ENCODE measurements at regions of chr11 and their contacts with region 1.

Region 1: GRCh38 chr11:125995313-125995712 is 49.5 kb downstream of the VSIG10L2 start:
- DNase-seq: no peak
- ATAC-seq: peak; percentile 99
- H3K4me3 ChIP-seq: peak overlapping the region; percentile 1; the same call in 1 of the 2 replicates
- H3K27ac ChIP-seq: 0 out of 2 replicates have a peak overlapping the region, but pooled peaks have one; percentile 14
- H3K4me1 ChIP-seq: peaks cover 8% of the 10 kb centered on the region
- H3K27me3 ChIP-seq: no peaks in the 10 kb centered on the region
- CTCF ChIP-seq: no peak
- EP300 ChIP-seq: no peak
- POLR2A ChIP-seq: no peak
- RAD21 ChIP-seq: no peak

Region 2: DNA sequence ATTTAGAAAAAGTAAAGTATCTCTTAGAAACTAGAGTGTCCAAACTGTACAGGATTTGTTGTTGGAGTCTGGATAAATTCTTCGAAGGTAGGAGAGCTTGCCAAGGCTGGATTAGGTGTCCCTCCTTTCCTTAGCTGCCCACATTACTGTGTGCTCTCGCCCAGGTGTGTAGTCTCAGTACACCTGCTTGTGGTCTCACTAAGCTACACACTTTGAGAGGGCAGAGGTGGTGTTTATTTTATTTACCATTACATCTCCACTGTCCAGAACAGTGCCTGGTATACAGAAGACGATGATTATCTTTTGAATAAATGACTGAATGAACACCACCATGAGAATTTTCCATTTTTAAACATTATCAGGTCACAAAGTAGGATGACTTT is 13.0 kb before region 1 on chr11:
- CTCF ChIA-PET with region 1: interaction called, 4 read pairs
- POLR2A ChIA-PET with region 1: interaction called, 4 read pairs
- RAD21 ChIA-PET with region 1: no interaction called
- SMC1A ChIA-PET with region 1: interaction called, 31 read pairs
- in situ Hi-C with region 1: no loop called
- intact Hi-C with region 1: no loop called
- DNase-seq: no peak
- ATAC-seq: peak; percentile 35
- H3K4me3 ChIP-seq: no peak overlapping the region
- H3K27ac ChIP-seq: peak overlapping the region; percentile 50; the same call in 1 of the 2 replicates
- H3K4me1 ChIP-seq: no peaks in the 10 kb centered on the region
- H3K27me3 ChIP-seq: no peaks in the 10 kb centered on the region; a peak in 1 of 4 replicates
- CTCF ChIP-seq: no peak
- EP300 ChIP-seq: no peak
- POLR2A ChIP-seq: no peak
- RAD21 ChIP-seq: no peak

Region 3: DNA sequence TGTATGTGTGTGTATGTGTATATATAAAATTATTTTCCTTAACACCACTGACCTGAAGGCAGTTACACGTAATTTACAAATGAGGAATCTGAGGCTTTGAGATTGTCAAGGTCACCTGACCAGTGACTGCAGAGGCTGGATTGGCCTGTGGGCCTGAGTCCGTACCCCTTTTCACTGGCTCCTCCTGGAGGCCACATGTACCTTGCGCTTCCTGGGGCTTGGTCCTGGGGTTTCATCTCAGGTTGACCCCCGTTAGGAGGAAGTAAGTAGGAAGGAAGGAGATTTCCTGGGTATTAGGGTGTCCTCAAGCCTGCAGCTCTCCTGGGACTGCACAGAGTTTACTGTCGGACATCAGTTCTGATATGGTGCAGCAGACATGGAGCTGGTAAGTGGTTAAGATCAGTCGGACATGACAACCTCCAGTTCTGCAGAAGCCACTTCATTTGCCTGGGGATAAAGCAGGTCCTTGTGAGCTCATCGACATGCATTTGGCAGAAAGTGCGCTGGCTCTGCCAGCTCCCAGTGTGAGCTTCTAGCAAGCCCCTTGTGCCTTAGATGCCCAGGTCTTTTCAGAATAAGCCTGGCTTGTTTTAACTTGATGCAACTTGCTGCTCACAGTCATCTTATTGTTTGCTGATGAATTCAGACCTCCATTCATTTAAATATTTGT is 396.8 kb after region 1 on chr11:
- CTCF ChIA-PET with region 1: no interaction called
- POLR2A ChIA-PET with region 1: no interaction called
- RAD21 ChIA-PET with region 1: no interaction called
- SMC1A ChIA-PET with region 1: no interaction called
- in situ Hi-C with region 1: no loop called
- intact Hi-C with region 1: no loop called
- DNase-seq: peak; percentile 35
- ATAC-seq: peak; percentile 75
- H3K4me3 ChIP-seq: no peak overlapping the region
- H3K27ac ChIP-seq: no peak overlapping the region
- H3K4me1 ChIP-seq: peaks cover 9% of the 10 kb centered on the region
- H3K27me3 ChIP-seq: no peaks in the 10 kb centered on the region
- CTCF ChIP-seq: peak in 2 of 3 experiments; percentile 22 to 29; a peak in 4 of 6 replicates
- EP300 ChIP-seq: no peak
- POLR2A ChIP-seq: no peak
- RAD21 ChIP-seq: peak; percentile 29; the same call in 1 of the 2 replicates

Measured in GM12878 (cell line).